ENCODE measurements at regions of chr7 and their contacts with region 1.

Region 1: GRCh38 chr7:102412548-102412947 is 16.4 kb downstream of the PRKRIP1 start:
- DNase-seq: no peak
- H3K4me3 ChIP-seq: no peak overlapping the region
- H3K27me3 ChIP-seq: no peaks in the 10 kb centered on the region
- CTCF ChIP-seq: peak; percentile 42; the same call in 1 of the 2 replicates

Region 2: DNA sequence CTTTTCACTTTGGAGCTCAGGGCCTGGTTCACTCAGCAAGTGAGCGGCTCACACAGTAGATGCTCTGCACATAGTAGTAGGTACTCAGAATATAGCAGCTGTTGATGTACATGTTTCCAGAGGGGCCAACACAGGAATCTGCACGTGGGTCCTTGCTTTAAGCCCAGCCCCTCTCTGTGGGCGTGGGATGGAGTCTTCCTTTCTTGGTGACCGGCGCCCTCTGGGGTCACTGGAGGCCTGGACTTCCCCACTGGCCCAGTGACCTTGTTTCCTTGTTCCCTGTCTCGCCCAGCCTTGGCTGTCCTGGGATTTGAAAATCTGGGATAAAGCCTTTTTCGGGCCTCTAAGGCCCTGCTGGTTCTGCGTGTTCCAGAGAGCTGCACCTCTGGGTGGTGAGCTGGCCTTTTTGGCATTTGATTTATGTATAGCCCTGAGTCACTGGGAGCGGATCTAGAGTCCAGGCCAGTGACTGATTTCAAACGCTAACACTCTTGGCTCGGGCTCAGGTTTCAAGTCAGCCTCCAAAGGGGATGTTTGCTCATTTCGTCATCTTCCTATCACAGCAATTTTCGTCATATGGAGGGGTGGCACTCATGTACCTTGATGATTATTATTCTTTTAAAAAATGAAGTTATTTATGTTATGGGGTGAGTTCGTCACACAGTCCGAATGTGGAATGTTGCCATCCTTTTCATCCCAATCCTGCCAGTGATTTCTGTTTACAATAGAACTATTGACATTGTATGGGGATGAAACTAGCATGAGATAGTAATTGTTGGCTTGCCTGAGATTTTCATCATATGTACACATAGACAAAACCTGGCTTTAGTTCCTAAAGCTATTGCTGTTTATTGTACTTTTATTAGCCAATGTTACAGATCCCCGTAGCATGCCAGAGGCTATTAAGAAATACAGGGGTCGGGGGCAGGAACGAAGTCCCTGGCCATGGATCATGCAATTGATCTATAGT is 529.7 kb before region 1 on chr7:
- CTCF ChIA-PET with region 1: no interaction called
- POLR2A ChIA-PET with region 1: interaction called, 16 read pairs
- DNase-seq: peak; percentile 99
- H3K4me3 ChIP-seq: no peak overlapping the region
- H3K27me3 ChIP-seq: no peaks in the 10 kb centered on the region
- CTCF ChIP-seq: no peak

Region 3: DNA sequence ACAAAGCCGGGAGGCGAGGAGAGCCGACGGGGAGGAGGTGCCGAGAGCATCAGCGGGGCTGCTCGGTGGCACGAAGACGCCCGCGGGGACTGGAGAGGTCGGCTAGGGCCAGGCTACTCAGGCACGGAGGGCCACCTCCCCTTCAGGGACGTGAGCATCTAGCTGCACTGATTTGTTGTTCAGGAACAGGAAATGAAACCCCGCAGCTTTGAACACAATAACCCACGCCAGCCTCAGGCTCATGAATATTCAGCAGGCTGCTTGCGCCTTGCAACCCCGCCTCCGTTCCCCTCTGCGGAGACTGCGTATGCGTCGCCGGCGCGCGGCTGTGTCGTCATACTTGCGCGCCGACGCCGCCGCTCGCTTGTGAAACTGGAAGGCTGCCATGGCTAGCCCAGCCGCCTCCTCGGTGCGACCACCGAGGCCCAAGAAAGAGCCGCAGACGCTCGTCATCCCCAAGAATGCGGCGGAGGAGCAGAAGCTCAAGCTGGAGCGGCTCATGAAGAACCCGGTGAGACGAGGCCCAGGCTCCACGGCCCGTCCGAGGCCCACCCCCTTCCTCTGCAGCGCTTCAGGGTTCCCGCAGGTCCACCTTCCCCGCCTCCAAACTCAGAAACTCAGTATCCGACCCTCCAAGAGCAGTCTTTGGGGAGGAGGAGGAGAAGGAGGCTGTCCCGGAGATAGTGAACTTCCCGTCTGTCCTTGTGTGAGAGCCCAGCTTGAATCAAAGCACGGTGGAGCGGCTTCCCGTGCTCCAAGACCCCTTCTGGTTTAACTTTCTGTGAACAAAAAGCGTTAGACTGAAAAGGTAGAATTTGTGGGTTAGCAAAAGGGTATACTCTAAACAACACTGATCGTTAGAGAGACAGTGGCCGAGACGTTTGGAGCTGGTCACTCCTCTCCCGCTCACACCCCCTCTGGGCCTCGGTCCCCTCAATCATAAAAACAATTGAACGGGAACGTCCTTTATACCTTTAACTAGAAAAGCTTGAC is 16.2 kb before region 1 on chr7 and contains the start of gene PRKRIP1:
- CTCF ChIA-PET with region 1: no interaction called
- POLR2A ChIA-PET with region 1: no interaction called
- DNase-seq: peak; percentile 65
- H3K4me3 ChIP-seq: peak within 1 kb of the TSS; percentile 85
- H3K27me3 ChIP-seq: no peaks in the 10 kb centered on the region
- CTCF ChIP-seq: no peak
- polyA plus RNA-seq, gene PRKRIP1: 11.9 and 14.3 TPM in 2 replicates

Measured in BJ (cell line).